Caco-2 (cell line): ENCODE measurements at regions of chr12 and their contacts with region 1.

Region 1: GRCh38 chr12:32647275-32647674 is 31.8 kb upstream of the DNM1L start:
- DNase-seq: no peak
- H3K4me3 ChIP-seq: no peak overlapping the region
- H3K4me3 Mint-ChIP-seq: no peak overlapping the region
- H3K27ac Mint-ChIP-seq: no peak overlapping the region
- H3K4me1 ChIP-seq: no peaks in the 10 kb centered on the region
- H3K4me1 Mint-ChIP-seq: peaks cover 7% of the 10 kb centered on the region
- H3K27me3 ChIP-seq: no peaks in the 10 kb centered on the region
- H3K27me3 Mint-ChIP-seq: no peaks in the 10 kb centered on the region
- CTCF ChIP-seq: no peak

Region 2: GRCh38 chr12:32659908-32660440 is 12.7 kb after region 1 on chr12:
- CTCF ChIA-PET with region 1: interaction called, 4 read pairs
- POLR2A ChIA-PET with region 1: no interaction called
- intact Hi-C with region 1: loop called (anchors 2 kb)
- DNase-seq: peak in 1 of 2 experiments; percentile 27
- H3K4me3 ChIP-seq: no peak overlapping the region
- H3K4me3 Mint-ChIP-seq: no peak overlapping the region
- H3K27ac Mint-ChIP-seq: no peak overlapping the region
- H3K4me1 ChIP-seq: no peaks in the 10 kb centered on the region
- H3K4me1 Mint-ChIP-seq: no peaks in the 10 kb centered on the region
- H3K27me3 ChIP-seq: no peaks in the 10 kb centered on the region
- H3K27me3 Mint-ChIP-seq: no peaks in the 10 kb centered on the region
- CTCF ChIP-seq: no peak

Region 3: DNA sequence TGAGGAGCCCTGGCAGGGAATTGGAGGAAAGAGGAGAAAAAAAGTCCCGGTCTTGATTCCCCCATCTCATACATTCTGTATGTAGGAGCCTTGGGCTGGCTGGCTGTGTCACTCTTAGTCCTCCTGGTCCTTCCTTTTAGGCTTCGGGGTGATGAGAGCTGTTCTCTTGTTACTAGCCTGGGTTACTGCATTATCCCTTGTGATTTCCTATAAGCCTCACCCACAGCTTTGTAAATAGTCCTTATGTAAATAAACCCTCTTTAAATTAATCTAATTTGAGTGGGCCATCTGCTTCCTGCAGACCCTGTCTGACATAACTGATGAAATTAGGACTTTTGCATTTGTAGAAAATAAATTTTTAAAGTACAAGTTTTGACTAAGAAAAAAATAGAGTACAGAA is 51.0 kb after region 1 on chr12:
- CTCF ChIA-PET with region 1: no interaction called
- POLR2A ChIA-PET with region 1: no interaction called
- intact Hi-C with region 1: no loop called
- DNase-seq: no peak
- H3K4me3 ChIP-seq: no peak overlapping the region
- H3K4me3 Mint-ChIP-seq: no peak overlapping the region
- H3K27ac Mint-ChIP-seq: no peak overlapping the region
- H3K4me1 ChIP-seq: no peaks in the 10 kb centered on the region
- H3K4me1 Mint-ChIP-seq: no peaks in the 10 kb centered on the region
- H3K27me3 ChIP-seq: no peaks in the 10 kb centered on the region
- H3K27me3 Mint-ChIP-seq: no peaks in the 10 kb centered on the region
- CTCF ChIP-seq: no peak

Region 4: DNA sequence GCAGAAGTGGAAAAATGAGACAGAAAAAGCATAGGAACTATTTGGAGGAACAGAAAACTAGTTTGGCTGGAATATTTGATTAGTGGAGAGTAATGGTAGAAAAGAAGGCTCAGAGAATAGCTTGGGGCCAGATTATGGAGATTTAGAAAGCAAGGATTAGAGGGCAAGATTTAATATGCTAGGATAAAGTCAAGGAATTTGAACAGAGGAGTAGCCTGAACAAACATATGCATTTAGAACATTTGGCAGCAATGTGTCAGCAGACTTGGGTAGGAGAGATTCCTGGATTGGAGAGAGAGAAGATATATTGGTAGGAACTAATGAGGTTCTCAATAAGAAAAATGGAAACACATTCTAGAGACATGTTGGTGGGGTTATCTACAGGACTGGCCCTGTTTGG is 478.5 kb after region 1 on chr12:
- CTCF ChIA-PET with region 1: no interaction called
- POLR2A ChIA-PET with region 1: no interaction called
- intact Hi-C with region 1: no loop called
- DNase-seq: no peak
- H3K4me3 ChIP-seq: no peak overlapping the region
- H3K4me3 Mint-ChIP-seq: no peak overlapping the region
- H3K27ac Mint-ChIP-seq: no peak overlapping the region
- H3K4me1 ChIP-seq: no peaks in the 10 kb centered on the region
- H3K4me1 Mint-ChIP-seq: no peaks in the 10 kb centered on the region
- H3K27me3 ChIP-seq: no peaks in the 10 kb centered on the region
- H3K27me3 Mint-ChIP-seq: no peaks in the 10 kb centered on the region
- CTCF ChIP-seq: no peak